Colonic mucosa (tissue), 4 donors: ENCODE measurements at regions of chr15 and their contacts with region 1.

Region 1: DNA sequence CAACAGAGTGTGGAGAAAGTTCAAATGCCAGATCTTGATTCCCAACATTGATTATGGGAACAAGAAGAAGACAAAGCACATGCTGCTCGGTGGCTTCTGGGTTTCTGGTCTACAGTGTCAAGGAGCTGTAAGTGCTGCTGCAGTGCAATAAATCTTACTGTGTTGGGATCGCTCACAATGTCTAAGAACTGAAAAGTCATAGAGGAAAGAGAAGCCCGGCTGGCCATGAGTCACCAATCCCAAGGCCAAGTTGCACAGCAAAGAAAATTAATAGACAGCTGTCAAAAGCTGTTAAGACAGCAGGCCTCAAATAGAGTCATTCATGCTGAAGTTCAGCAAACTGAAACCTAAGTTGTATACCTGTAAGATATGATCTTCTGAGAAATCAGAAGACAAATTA is 33.2 kb upstream of the SPPL2A start:
- DNase-seq: peak; percentile 56
- H3K4me3 ChIP-seq: no peak overlapping the region
- H3K27ac ChIP-seq: peak overlapping the region; percentile 74
- H3K4me1 ChIP-seq: peaks cover 9% of the 10 kb centered on the region
- H3K27me3 ChIP-seq: no peaks in the 10 kb centered on the region
- CTCF ChIP-seq: no peak

Region 2: DNA sequence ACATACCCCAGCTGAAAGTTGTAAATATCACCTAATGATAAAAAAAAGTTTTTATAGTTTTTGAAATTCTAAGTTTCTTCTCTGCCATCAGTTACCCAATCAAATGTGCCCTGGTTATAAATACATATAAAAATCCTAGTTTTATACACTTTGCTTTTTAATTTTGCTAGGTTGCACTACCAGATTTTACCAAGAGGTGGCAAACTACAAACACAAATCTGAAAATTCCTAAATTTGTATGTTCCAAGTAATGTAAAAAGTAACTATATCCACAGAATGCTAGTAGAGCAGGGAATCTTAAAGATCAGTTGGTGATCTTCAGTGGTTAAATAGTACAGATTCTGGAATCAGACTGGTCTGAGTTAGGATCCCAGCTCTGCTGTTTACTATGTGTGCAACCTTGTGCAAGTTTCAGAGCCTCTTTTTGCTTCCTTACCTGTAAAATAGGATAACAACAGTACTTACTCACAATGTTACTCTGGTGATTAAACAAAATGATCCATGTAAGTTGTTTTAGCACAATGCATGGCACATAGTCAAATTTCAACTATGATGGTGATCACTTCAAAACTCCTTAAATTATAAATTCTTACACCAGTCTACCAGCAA is 123.0 kb before region 1 on chr15:
- intact Hi-C with region 1: no loop called
- DNase-seq: no peak
- H3K4me3 ChIP-seq: no peak overlapping the region
- H3K27ac ChIP-seq: no peak overlapping the region
- H3K4me1 ChIP-seq: no peaks in the 10 kb centered on the region
- H3K27me3 ChIP-seq: no peaks in the 10 kb centered on the region
- CTCF ChIP-seq: peak; percentile 79

Region 3: GRCh38 chr15:50865515-50866353 is 67.0 kb after region 1 on chr15:
- intact Hi-C with region 1: loop called (anchors 10 kb)
- DNase-seq: no peak
- H3K4me3 ChIP-seq: no peak overlapping the region
- H3K27ac ChIP-seq: no peak overlapping the region
- H3K4me1 ChIP-seq: peaks cover 4% of the 10 kb centered on the region
- H3K27me3 ChIP-seq: no peaks in the 10 kb centered on the region
- CTCF ChIP-seq: no peak